ENCODE measurements at regions of chr1 and their contacts with region 1.

Region 1: DNA sequence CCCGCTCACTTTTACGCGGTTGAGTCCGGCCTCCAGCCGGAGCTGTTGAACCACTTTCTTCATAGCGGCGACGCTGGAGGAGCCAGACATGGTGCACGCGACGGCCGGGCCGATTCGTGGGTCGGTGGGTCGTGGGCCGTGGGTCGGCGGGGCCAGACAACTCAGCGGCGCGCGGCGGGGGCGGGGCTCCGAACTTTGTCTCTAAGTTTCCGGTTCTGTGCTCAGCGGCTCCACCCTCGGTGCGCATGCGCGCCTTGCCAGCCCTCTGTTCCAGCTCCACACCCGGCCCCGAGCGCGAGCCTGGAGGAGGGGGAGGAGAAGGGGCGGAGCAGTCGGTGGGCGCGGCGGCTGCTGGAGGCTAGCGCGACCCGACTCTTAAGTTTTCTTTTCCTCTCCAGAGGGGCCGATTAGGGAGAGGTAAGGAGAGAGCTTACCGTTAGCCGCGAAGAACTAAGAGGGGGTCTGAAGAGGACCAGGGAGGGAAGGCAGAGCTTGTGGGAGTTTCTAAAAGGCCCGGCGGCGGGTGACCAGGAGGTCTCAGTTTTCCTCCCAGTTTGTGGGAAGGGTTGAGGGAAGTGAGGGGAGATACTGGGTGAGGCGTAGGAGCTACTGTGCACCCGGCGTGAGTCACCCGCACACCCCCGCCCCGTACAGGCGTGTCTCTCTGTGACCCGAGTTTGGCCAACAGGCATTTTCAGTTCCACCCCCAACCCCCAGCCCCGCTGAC is at the starts of genes GNG5 and SPATA1:
- DNase-seq: peak; percentile 99
- H3K4me3 Mint-ChIP-seq: peak within 1 kb of the TSS; percentile 99
- H3K27ac Mint-ChIP-seq: peak within 1 kb of the TSS; percentile 99
- H3K4me1 Mint-ChIP-seq: peaks cover 41% of the 10 kb centered on the region
- H3K27me3 Mint-ChIP-seq: no peaks in the 10 kb centered on the region
- total RNA-seq, gene GNG5: 115 and 122 TPM in 2 replicates
- total RNA-seq, gene SPATA1: 0.69 and 0.98 TPM in 2 replicates

Region 2: DNA sequence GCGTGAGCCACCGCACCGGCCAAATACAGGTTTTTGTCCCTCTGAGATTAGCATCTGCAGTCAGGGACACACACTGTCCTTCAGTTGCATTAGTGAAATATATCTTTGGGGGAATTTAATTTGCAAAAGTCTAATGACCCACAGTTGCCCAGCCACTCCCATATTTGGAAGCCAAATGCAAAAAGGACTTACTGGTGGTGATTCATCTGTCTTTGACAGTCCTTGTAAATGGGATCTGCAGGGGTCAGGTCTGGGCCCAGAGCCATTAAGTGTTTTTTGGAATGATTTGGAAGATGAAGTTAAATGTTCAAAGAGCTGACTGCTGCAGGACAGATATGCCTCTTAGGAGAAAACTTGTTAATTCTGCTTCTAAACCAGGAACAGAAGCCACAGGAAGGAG is 152.5 kb before region 1 on chr1:
- intact Hi-C with region 1: no loop called
- DNase-seq: no peak
- H3K4me3 Mint-ChIP-seq: no peak overlapping the region
- H3K27ac Mint-ChIP-seq: no peak overlapping the region
- H3K4me1 Mint-ChIP-seq: no peaks in the 10 kb centered on the region
- H3K27me3 Mint-ChIP-seq: no peaks in the 10 kb centered on the region

Region 3: DNA sequence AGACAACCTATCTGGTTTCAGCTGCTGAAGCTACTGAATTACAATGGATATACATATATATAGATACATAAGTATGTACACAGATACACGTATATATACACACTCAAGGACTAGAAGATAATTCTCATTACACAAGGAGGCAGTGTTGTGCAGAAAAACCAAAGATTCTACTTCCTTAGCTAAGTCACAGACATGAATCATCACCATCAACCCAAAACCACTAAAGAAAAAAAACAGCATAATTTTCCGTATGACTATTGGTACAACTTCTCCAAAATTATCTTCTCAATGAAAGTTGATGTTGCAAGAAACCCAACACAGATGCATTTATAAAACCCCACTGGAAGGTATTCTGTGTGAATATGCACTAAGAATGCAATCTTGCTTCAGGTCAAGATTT is 63.9 kb before region 1 on chr1:
- intact Hi-C with region 1: loop called (anchors 1 kb)
- DNase-seq: peak; percentile 80
- H3K4me3 Mint-ChIP-seq: peak overlapping the region; percentile 28
- H3K27ac Mint-ChIP-seq: peak overlapping the region; percentile 69
- H3K4me1 Mint-ChIP-seq: peaks cover 16% of the 10 kb centered on the region
- H3K27me3 Mint-ChIP-seq: peaks cover 15% of the 10 kb centered on the region

Region 4: DNA sequence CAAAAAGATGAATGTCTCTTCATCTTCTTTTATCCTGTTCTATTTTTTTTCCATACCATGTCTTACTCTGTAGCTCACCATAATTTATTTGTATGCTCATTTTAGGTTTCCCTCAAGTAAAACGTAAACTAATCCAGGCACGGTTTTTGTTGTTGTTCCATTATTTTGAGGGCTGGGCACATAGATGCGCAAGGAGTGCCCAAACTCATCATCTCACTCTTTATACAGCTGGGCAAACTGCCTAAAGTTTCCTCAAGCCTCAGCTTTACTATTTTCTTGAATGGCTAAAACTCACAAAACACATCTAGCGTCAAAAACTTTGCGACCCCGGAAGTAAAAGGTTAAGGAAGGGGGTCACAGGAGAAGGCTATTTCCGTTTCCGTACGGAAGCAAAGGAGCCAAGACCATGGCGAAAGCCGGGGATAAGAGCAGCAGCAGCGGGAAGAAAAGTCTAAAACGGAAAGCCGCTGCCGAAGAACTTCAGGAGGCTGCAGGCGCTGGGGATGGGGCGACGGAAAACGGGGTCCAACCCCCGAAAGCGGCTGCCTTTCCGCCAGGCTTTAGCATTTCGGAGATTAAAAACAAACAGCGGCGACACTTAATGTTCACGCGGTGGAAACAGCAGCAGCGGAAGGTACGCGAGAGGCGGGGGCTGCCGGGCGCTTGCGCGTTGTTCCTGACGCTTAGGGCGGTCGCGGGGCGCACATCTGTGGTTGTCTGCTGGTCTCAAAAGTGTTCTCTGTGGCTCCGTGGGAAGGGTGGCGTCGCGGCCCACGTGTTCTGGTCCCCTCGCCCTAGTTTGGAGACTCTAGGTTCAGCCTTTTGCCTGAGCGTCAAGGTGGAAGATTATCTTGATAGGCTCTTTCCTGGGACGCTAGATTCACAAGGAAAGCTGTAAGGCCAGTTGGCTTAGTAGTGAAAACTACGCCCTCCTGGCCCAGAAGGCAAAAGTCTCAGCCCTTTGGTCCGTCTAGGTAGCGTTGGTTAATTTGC is 27.0 kb before region 1 on chr1 and contains the start of gene RPF1:
- intact Hi-C with region 1: loop called (anchors 1 kb)
- DNase-seq: peak; percentile 93
- H3K4me3 Mint-ChIP-seq: peak within 1 kb of the TSS; percentile 96
- H3K27ac Mint-ChIP-seq: peak within 1 kb of the TSS; percentile 97
- H3K4me1 Mint-ChIP-seq: peaks cover 26% of the 10 kb centered on the region
- H3K27me3 Mint-ChIP-seq: peaks cover 20% of the 10 kb centered on the region
- total RNA-seq, gene RPF1: 63.3 and 64.4 TPM in 2 replicates

Region 5: DNA sequence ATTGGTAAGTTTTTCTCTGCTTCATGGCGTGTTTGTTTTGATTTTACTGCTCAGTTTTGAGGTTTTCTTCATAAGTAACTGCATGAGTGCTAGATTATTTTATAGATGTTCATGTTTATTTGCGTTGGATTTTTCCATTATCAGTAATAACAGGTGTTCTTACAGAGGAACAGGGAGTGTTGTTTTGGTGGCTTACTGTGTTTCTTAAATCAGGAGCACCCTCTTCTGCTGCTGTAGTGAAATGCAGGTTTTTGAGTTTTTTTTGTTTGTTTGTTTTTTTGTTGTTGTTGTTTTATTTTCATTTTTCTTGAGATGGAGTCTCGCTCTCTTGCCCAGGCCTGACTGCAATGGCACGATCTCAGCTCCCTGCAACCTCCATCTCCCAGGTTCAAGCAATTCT is 35.5 kb after region 1 on chr1:
- intact Hi-C with region 1: loop called (anchors 5 kb)
- DNase-seq: no peak
- H3K4me3 Mint-ChIP-seq: no peak overlapping the region
- H3K27ac Mint-ChIP-seq: no peak overlapping the region
- H3K4me1 Mint-ChIP-seq: peaks cover 32% of the 10 kb centered on the region
- H3K27me3 Mint-ChIP-seq: no peaks in the 10 kb centered on the region

Region 6: DNA sequence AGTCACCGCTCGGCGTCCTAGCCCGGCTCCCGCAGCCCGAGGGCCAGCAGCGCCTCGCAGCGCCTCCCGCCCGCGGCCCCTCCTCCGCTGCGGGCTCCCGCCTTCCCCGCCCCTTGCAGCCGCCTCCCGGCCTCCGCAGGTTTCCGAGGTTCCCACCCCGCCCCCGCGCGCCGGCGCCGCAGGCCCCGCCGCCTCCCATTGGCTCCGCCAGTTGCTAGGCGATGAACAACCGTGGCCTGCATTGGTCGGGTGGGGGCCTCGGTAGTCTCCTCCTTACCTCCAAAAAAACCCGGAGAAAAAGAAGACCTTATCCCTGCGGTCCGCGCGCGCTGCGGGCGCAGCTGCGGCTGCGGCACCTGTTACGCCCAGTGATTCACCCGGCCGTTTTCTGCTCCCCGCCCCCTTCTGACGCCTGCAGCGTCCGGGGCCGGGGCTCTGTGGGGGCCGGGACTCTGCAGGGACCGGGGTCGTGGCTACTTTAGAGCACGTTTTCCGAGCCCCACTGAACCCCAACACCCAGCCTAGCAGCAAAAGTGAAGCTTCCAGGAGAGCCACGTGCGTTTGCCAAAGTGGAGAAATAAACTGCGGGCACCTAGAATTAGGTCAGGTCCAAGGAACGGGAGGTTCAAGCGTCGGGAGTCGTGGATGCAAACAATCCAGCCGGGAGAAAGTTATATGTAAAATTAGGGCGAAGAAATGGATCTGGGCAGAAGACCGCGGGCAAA is 184.4 kb after region 1 on chr1 and contains the start of gene SSX2IP:
- intact Hi-C with region 1: loop called (anchors 1 kb)
- DNase-seq: peak; percentile 100
- H3K4me3 Mint-ChIP-seq: peak within 1 kb of the TSS; percentile 98
- H3K27ac Mint-ChIP-seq: peak within 1 kb of the TSS; percentile 95
- H3K4me1 Mint-ChIP-seq: peaks cover 43% of the 10 kb centered on the region
- H3K27me3 Mint-ChIP-seq: peaks cover 4% of the 10 kb centered on the region
- total RNA-seq, gene SSX2IP: 10.0 and 11.8 TPM in 2 replicates

Region 7: GRCh38 chr1:85276215-85276977 is 770.2 kb after region 1 on chr1 and contains the start of gene BCL10:
- intact Hi-C with region 1: loop called (anchors 2 kb)
- DNase-seq: peak; percentile 100
- H3K4me3 Mint-ChIP-seq: peak within 1 kb of the TSS; percentile 84
- H3K27ac Mint-ChIP-seq: peak within 1 kb of the TSS; percentile 91
- H3K4me1 Mint-ChIP-seq: peaks cover 46% of the 10 kb centered on the region
- H3K27me3 Mint-ChIP-seq: peaks cover 20% of the 10 kb centered on the region
- total RNA-seq, gene BCL10: 25.5 and 27.8 TPM in 2 replicates

Region 8: GRCh38 chr1:85413169-85413568 is 907.0 kb after region 1 on chr1:
- intact Hi-C with region 1: no loop called
- DNase-seq: no peak
- H3K4me3 Mint-ChIP-seq: no peak overlapping the region
- H3K27ac Mint-ChIP-seq: no peak overlapping the region
- H3K4me1 Mint-ChIP-seq: no peaks in the 10 kb centered on the region
- H3K27me3 Mint-ChIP-seq: peaks cover 3% of the 10 kb centered on the region

Measured in activated CD4-positive, alpha-beta T cell treated with anti-CD3 and anti-CD28 coated beads, Interleukin-2, amount 10 ng/mL, durations not matched to agents 24 days and 14 days (primary cell).